ENCODE measurements at regions of chr1 and their contacts with region 1.

Region 1: DNA sequence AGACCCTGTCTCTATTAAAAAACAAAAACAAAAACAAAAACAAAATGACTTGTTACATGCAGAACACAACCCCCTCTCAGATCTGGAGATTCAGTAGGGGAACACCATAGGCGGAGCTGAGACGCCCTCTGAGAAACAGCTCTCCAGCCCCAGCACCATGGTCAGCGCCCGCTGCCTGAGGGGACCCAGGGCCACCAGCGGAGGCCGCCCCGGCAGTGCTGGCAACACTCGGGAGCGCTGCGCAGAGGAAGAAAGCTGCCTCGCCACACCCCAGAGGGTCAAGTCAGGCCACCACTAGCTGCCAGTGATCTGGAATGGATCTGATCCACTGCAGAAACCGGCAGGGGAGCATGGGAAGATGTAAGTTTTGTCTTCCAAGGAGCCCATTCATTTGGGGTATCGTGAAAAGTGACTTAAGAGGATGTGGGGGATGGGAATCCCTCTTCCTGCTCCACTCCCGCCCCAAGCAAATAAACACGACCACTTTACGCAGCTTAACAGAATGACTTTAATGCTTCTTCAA is 3.1 kb downstream of the ACTA1 start:
- DNase-seq: peak; percentile 71
- ATAC-seq: peak; percentile 68
- H3K4me3 Mint-ChIP-seq: peak overlapping the region; percentile 47
- H3K27ac Mint-ChIP-seq: no peak overlapping the region
- H3K4me1 Mint-ChIP-seq: peaks cover 25% of the 10 kb centered on the region
- H3K27me3 Mint-ChIP-seq: peaks cover 75% of the 10 kb centered on the region

Region 2: GRCh38 chr1:229412078-229412477 is 18.7 kb before region 1 on chr1:
- CTCF ChIA-PET with region 1: no interaction called
- POLR2A ChIA-PET with region 1: no interaction called
- DNase-seq: no peak
- ATAC-seq: no peak
- H3K4me3 Mint-ChIP-seq: no peak overlapping the region
- H3K27ac Mint-ChIP-seq: no peak overlapping the region
- H3K4me1 Mint-ChIP-seq: peaks cover 27% of the 10 kb centered on the region
- H3K27me3 Mint-ChIP-seq: peaks cover 48% of the 10 kb centered on the region

Region 3: DNA sequence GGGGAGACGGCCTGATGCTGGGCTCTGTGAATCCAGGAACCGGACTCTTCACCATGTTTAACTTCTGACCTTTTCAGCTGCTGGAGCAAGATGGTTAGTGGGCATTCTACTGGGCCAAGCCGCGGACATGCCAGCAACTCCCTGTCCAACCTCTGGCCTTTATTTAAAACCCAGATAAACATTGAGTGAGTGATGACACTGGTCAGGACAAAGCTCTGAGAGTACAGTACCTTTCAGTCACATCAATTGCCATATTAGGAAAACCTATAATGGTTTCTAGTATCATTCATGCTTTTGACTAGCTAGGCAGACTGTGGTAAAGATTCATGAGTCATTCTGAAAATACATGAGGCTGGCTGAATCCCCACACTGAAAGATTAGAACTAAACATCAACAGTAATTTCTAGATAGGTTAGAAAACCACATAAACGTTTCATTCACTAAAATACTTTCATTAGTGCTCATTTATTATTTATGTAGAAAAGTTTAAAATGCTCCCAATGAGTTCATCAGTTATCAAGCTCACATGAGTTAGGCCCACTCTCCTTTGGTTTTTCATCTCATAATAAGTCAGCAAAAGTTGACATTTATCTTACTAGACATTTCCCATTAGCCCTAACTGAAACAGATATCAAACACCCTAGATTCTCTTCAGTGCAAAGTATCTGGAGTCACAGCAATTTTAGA is 10.2 kb after region 1 on chr1:
- CTCF ChIA-PET with region 1: interaction called, 11 read pairs
- POLR2A ChIA-PET with region 1: no interaction called
- DNase-seq: peak; percentile 56
- ATAC-seq: peak; percentile 94
- H3K4me3 Mint-ChIP-seq: peak overlapping the region; percentile 10
- H3K27ac Mint-ChIP-seq: peak overlapping the region; percentile 73
- H3K4me1 Mint-ChIP-seq: peaks cover 30% of the 10 kb centered on the region
- H3K27me3 Mint-ChIP-seq: peaks cover 9% of the 10 kb centered on the region

Measured in activated CD8-positive, alpha-beta T cell treated with anti-CD3 and anti-CD28 coated beads, Interleukin-2, amount 10 ng/mL, durations not matched to agents 7 days and 5 days (primary cell).